Ascending aorta (tissue), 2 donors: ENCODE measurements at regions of chr5 and their contacts with region 1.

Region 1: GRCh38 chr5:157476702-157477408 is 16.8 kb downstream of the NIPAL4 start:
- DNase-seq: no peak
- H3K4me3 ChIP-seq: no peak overlapping the region
- H3K27ac ChIP-seq: no peak overlapping the region
- H3K4me1 ChIP-seq: peaks cover 3 to 9% of the 10 kb centered on the region in 2 donors
- H3K27me3 ChIP-seq: no peaks in the 10 kb centered on the region
- CTCF ChIP-seq: peak; percentile 51 to 78 (median 67)

Region 2: DNA sequence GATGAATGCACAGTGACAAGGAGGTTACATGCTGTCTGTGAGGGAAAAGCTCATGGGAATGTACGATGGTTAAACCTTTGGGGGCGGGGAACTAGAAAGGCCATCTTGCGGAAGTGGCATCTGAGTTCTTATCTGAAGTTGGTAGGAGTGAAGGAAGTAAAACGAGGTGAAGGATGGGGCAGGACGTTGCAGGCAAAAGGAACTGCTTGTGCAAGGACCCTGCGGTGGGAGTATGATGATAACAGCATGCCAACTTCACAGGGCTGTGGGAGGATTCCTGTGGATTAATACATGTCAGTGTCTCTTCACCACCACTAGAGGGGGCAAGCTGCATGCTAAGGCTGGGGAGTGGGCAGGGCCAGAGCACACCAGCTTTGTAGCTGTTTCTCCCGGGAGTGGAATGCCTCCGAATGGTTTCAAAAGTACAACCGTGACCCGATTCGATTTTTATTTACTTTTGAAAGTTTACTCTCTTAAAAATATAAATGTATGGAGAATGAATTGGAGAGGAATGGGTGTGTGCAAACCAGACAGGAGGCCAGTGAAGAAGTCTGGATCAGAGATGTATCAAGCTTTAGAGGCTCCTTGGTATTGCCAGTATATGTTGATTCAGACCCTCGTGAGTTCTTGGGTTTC is 148.5 kb before region 1 on chr5:
- intact Hi-C with region 1: loop called (anchors 1 kb)
- DNase-seq: peak in 1 of 2 donors; percentile 70
- H3K4me3 ChIP-seq: peak overlapping the region; percentile 2 to 37
- H3K27ac ChIP-seq: no peak overlapping the region
- H3K4me1 ChIP-seq: no peaks in the 10 kb centered on the region
- H3K27me3 ChIP-seq: no peaks in the 10 kb centered on the region
- CTCF ChIP-seq: peak; percentile 79 to 91 (median 83)

Region 3: DNA sequence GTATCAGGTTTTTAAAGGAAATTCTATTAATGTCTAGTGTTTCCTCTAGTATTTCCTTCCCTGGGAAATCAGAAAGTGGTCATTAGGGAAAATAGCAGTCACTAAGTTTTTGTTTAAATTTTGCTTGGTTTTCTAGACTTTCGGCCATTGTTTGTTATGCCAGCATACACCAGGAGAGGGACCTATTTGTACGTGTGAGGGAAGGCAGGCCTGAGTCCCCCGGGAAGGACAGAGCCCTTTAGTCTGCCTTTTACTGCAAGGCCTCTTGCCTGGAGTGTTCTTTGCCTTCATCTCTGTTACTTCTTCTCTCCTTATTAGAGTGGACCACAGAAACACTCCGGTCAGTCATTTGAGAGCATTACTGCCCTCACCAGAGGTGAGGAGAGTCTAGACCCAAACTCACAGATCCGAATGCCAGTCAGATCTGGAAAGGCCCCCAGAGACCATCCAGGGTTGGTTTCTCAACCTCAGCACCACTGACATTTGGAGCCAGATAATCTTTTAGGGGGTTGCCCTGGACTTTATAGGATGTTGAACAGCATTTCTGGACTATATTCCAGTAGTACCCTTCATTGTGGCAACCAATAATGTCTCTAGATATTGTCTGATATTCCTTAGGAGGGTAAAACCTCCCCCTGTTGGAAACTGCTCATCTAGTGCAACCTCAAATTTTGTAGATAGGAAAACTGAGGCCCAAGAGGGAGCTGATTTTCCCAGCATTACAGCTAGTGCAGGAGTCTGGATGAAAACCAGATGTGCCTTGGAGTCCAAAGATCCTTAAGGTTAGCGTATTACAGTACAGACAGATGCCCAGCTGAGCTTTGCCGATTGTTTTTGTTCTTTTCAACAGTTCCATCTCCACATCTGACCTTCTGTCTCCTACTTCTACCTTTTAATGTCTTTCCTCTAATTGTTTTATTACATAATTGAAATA is 109.8 kb before region 1 on chr5:
- intact Hi-C with region 1: loop called (anchors 1 kb)
- DNase-seq: peak in 1 of 2 donors; percentile 72
- H3K4me3 ChIP-seq: no peak overlapping the region
- H3K27ac ChIP-seq: peak overlapping the region; percentile 28 to 54
- H3K4me1 ChIP-seq: peaks cover 0 to 3% of the 10 kb centered on the region in 2 donors
- H3K27me3 ChIP-seq: no peaks in the 10 kb centered on the region
- CTCF ChIP-seq: peak; percentile 53 to 78 (median 68)

Region 4: GRCh38 chr5:157431544-157432200 is 45.2 kb before region 1 on chr5:
- intact Hi-C with region 1: loop called (anchors 5 kb)
- DNase-seq: no peak
- H3K4me3 ChIP-seq: no peak overlapping the region
- H3K27ac ChIP-seq: no peak overlapping the region
- H3K4me1 ChIP-seq: no peaks in the 10 kb centered on the region
- H3K27me3 ChIP-seq: no peaks in the 10 kb centered on the region
- CTCF ChIP-seq: peak; percentile 7 to 51 (median 22)

Region 5: DNA sequence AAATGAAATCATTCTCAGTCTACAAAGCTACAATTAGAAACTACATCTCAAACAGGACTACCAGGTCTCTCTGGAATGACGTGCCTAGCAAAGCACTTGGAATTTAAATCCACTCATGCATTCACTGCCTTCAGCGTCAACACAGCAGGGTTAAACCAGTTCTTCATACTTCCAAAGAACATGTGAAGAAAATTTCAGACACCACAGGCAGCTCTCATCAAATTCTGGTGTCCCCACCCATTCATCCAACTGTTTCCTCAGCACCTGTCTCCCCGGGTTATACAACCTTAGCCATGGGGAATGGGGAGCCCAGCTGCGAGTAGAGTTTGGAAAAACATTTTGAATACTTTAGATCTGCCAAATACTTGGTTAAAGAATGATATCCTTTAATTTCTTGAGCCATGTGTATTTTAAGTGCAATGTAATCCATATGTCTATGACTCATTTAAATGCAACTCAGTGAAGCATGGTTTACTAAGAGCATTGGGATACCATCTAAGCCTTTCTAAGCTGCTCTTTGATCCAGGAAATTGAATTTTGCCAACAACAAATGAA is 81.3 kb after region 1 on chr5:
- intact Hi-C with region 1: no loop called
- DNase-seq: peak in 1 of 2 donors; percentile 13
- H3K4me3 ChIP-seq: no peak overlapping the region
- H3K27ac ChIP-seq: peak overlapping the region; percentile 54 to 56
- H3K4me1 ChIP-seq: peaks cover 8 to 30% of the 10 kb centered on the region in 2 donors
- H3K27me3 ChIP-seq: no peaks in the 10 kb centered on the region
- CTCF ChIP-seq: no peak

Region 6: DNA sequence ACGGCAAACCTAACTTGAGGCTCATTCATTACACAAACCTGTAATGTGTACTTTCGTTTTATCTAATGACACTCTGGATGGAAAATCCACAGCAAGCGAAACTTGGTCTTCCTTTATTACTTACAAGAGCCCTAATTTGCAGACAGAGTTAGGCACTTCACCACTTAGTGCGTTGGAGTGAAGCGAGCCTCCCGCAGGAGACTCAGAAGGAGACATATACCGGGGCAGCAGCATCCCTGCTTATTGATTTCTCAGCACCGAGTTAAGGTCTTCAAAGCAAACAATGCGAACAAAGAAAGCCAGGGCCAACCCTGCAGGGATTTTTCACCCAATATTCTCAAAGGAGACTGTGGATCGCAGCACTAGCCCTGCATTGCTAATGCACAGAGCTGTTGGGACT is 295.3 kb after region 1 on chr5:
- intact Hi-C with region 1: no loop called
- DNase-seq: no peak
- H3K4me3 ChIP-seq: no peak overlapping the region
- H3K27ac ChIP-seq: no peak overlapping the region
- H3K4me1 ChIP-seq: no peaks in the 10 kb centered on the region
- H3K27me3 ChIP-seq: no peaks in the 10 kb centered on the region
- CTCF ChIP-seq: no peak

Region 7: GRCh38 chr5:158116965-158117364 is 640.1 kb after region 1 on chr5:
- intact Hi-C with region 1: no loop called
- DNase-seq: no peak
- H3K4me3 ChIP-seq: no peak overlapping the region
- H3K27ac ChIP-seq: no peak overlapping the region
- H3K4me1 ChIP-seq: no peaks in the 10 kb centered on the region
- H3K27me3 ChIP-seq: no peaks in the 10 kb centered on the region
- CTCF ChIP-seq: no peak